ENCODE measurements at regions of chr22 and their contacts with region 1.

Region 1: GRCh38 chr22:21629262-21630149 is at the start of gene YDJC:
- DNase-seq: peak; percentile 98
- ATAC-seq: peak; percentile 84
- H3K4me3 Mint-ChIP-seq: peak within 1 kb of the TSS; percentile 88
- H3K27ac Mint-ChIP-seq: peak within 1 kb of the TSS; percentile 90
- H3K4me1 Mint-ChIP-seq: peaks cover 25% of the 10 kb centered on the region
- H3K27me3 Mint-ChIP-seq: no peaks in the 10 kb centered on the region
- total RNA-seq, gene YDJC: 45.3 to 46.7 TPM

Region 2: GRCh38 chr22:21567456-21568346 is 61.8 kb before region 1 on chr22 and contains the start of gene UBE2L3:
- POLR2A ChIA-PET with region 1: interaction called, 30 read pairs
- DNase-seq: peak; percentile 92
- ATAC-seq: peak; percentile 59
- H3K4me3 Mint-ChIP-seq: peak within 1 kb of the TSS; percentile 97
- H3K27ac Mint-ChIP-seq: peak within 1 kb of the TSS; percentile 94
- H3K4me1 Mint-ChIP-seq: peaks cover 37% of the 10 kb centered on the region
- H3K27me3 Mint-ChIP-seq: peaks cover 2% of the 10 kb centered on the region
- total RNA-seq, gene UBE2L3: 49.3 to 51.5 TPM

Region 3: GRCh38 chr22:21587803-21588611 is 41.5 kb before region 1 on chr22:
- POLR2A ChIA-PET with region 1: no interaction called
- DNase-seq: no peak
- ATAC-seq: peak; percentile 91
- H3K4me3 Mint-ChIP-seq: peak overlapping the region; percentile 29
- H3K27ac Mint-ChIP-seq: peak overlapping the region; percentile 82
- H3K4me1 Mint-ChIP-seq: peaks cover 40% of the 10 kb centered on the region
- H3K27me3 Mint-ChIP-seq: no peaks in the 10 kb centered on the region

Region 4: DNA sequence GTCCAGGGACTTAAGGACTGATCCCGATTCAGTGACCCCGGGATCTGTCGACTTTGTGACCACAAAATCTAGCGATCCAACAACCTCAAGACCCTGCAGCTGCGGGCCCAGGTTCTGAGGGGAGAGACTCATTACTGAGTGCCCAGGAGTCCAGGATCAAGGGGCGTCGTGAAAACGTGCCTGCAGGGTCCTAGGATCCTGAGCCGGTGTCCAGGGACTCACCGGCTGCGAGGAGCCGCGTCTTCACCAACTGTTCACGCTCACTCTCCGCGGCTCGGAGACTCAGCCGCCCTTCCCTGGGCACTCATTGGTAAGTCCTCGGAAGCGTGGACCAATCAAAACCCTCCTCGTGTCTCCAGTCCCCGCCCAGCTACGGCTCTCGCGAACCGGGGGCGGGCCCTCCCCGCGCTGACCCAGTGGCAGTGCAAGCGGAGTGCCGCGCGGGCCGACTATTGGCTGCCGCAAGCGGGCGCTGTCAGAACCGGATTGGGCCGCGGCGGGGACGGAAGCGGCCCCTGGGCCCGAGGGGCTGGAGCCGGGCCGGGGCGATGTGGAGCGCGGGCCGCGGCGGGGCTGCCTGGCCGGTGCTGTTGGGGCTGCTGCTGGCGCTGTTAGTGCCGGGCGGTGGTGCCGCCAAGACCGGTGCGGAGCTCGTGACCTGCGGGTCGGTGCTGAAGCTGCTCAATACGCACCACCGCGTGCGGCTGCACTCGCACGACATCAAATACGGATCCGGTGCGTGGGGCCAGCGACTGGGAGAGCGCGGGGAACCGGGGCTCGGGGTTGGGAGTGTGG is 12.5 kb after region 1 on chr22 and contains the start of gene SDF2L1:
- POLR2A ChIA-PET with region 1: interaction called, 94 read pairs
- DNase-seq: peak; percentile 98
- ATAC-seq: peak; percentile 99
- H3K4me3 Mint-ChIP-seq: peak within 1 kb of the TSS; percentile 93
- H3K27ac Mint-ChIP-seq: peak within 1 kb of the TSS; percentile 86
- H3K4me1 Mint-ChIP-seq: peaks cover 27% of the 10 kb centered on the region
- H3K27me3 Mint-ChIP-seq: no peaks in the 10 kb centered on the region
- total RNA-seq, gene SDF2L1: 36.0 to 39.7 TPM

Region 5: GRCh38 chr22:21652010-21652546 is 22.6 kb after region 1 on chr22:
- POLR2A ChIA-PET with region 1: interaction called, 12 read pairs
- DNase-seq: peak; percentile 89
- ATAC-seq: peak; percentile 98
- H3K4me3 Mint-ChIP-seq: peak overlapping the region; percentile 83
- H3K27ac Mint-ChIP-seq: peak overlapping the region; percentile 88
- H3K4me1 Mint-ChIP-seq: peaks cover 24% of the 10 kb centered on the region
- H3K27me3 Mint-ChIP-seq: no peaks in the 10 kb centered on the region

Region 6: DNA sequence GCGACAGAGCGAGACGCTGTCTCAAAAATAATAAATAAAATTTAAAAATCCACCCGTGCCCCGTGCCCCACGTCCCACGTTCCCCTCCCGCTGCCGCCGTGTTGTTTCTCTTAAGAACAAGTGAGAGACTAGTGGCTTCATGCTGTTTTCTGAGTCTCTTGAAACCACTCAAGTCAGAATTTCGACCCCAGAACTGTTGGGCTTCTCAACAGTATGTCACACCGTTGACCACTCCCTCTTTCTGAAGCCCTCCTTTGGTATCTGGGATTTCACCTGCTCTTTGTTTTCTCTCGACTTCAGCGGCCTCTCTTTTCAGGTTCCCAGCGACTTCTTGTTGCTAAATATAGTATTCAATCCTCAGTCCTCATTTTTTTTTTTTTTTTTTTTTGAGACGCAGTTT is 37.3 kb after region 1 on chr22:
- POLR2A ChIA-PET with region 1: interaction called, 15 read pairs
- DNase-seq: no peak
- ATAC-seq: no peak
- H3K4me3 Mint-ChIP-seq: peak overlapping the region; percentile 94
- H3K27ac Mint-ChIP-seq: peak overlapping the region; percentile 97
- H3K4me1 Mint-ChIP-seq: peaks cover 23% of the 10 kb centered on the region
- H3K27me3 Mint-ChIP-seq: no peaks in the 10 kb centered on the region

Region 7: GRCh38 chr22:21796867-21797266 is 167.4 kb after region 1 on chr22:
- POLR2A ChIA-PET with region 1: no interaction called
- DNase-seq: no peak
- ATAC-seq: no peak
- H3K4me3 Mint-ChIP-seq: no peak overlapping the region
- H3K27ac Mint-ChIP-seq: no peak overlapping the region
- H3K4me1 Mint-ChIP-seq: peaks cover 2% of the 10 kb centered on the region
- H3K27me3 Mint-ChIP-seq: no peaks in the 10 kb centered on the region

Region 8: GRCh38 chr22:21907638-21908522 is 278.4 kb after region 1 on chr22:
- POLR2A ChIA-PET with region 1: no interaction called
- DNase-seq: no peak
- ATAC-seq: no peak
- H3K4me3 Mint-ChIP-seq: no peak overlapping the region
- H3K27ac Mint-ChIP-seq: no peak overlapping the region
- H3K4me1 Mint-ChIP-seq: no peaks in the 10 kb centered on the region
- H3K27me3 Mint-ChIP-seq: peaks cover 10% of the 10 kb centered on the region

Measured in activated naive CD8-positive, alpha-beta T cell treated with anti-CD3 and anti-CD28 coated beads, Interleukin-2, amount 10 ng/mL, durations not matched to agents 7 days and 5 days (primary cell).